HepG2 (cell line): ENCODE measurements at regions of chr2 and their contacts with region 1.

Region 1: GRCh38 chr2:69169655-69170389 is 156.8 kb downstream of the ANTXR1 start:
- DNase-seq: no peak
- ATAC-seq: no peak
- H3K4me3 ChIP-seq: no peak overlapping the region
- H3K27ac ChIP-seq: no peak overlapping the region
- H3K4me1 ChIP-seq: peaks cover 70% of the 10 kb centered on the region
- H3K27me3 ChIP-seq: no peaks in the 10 kb centered on the region
- CTCF ChIP-seq: no peak
- EP300 ChIP-seq: no peak
- POLR2A ChIP-seq: no peak
- RAD21 ChIP-seq: no peak

Region 2: GRCh38 chr2:69299772-69300516 is 130.1 kb after region 1 on chr2:
- CTCF ChIA-PET with region 1: no interaction called
- POLR2A ChIA-PET with region 1: no interaction called
- in situ Hi-C with region 1: loop called (anchors 5 kb)
- intact Hi-C with region 1: no loop called
- DNase-seq: no peak
- ATAC-seq: no peak
- H3K4me3 ChIP-seq: no peak overlapping the region
- H3K27ac ChIP-seq: no peak overlapping the region
- H3K4me1 ChIP-seq: peaks cover 50% of the 10 kb centered on the region
- H3K27me3 ChIP-seq: no peaks in the 10 kb centered on the region
- CTCF ChIP-seq: no peak
- EP300 ChIP-seq: no peak
- POLR2A ChIP-seq: no peak
- RAD21 ChIP-seq: no peak

Region 3: DNA sequence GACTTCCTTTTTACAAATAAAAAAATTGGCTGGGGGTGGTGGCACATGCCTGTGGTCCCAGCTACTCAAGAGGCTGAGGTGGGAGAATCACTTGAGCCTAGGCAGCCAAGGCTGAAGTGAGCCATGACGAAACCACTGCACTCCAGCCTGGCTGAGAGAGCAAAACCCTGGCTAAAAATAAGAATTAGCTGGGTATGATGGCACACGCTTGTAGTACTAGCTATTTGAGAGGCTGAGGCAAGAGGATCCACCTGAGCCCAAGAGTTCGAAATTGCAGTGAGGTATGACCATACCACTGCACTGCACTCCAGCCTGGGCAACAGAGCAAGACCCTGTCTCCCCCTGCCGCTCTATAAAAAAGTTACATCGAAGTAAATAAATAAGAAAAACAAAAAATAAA is 183.5 kb after region 1 on chr2:
- CTCF ChIA-PET with region 1: no interaction called
- POLR2A ChIA-PET with region 1: no interaction called
- in situ Hi-C with region 1: no loop called
- intact Hi-C with region 1: no loop called
- DNase-seq: no peak
- ATAC-seq: no peak
- H3K4me3 ChIP-seq: no peak overlapping the region
- H3K27ac ChIP-seq: no peak overlapping the region
- H3K4me1 ChIP-seq: peaks cover 30% of the 10 kb centered on the region
- H3K27me3 ChIP-seq: no peaks in the 10 kb centered on the region
- CTCF ChIP-seq: no peak
- EP300 ChIP-seq: no peak
- POLR2A ChIP-seq: no peak
- RAD21 ChIP-seq: no peak